Naive thymus-derived CD4-positive, alpha-beta T cell (primary cell): ENCODE measurements at regions of chr12 and their contacts with region 1.

Region 1: GRCh38 chr12:25347716-25348271 is 97.1 kb upstream of the KRAS start:
- DNase-seq: no peak
- ATAC-seq: no peak
- H3K4me3 ChIP-seq: no peak overlapping the region
- H3K4me3 Mint-ChIP-seq: no peak overlapping the region
- H3K27ac ChIP-seq: no peak overlapping the region
- H3K27ac Mint-ChIP-seq: peak overlapping the region in 2 of 9 donors; percentile 14 to 25
- H3K4me1 ChIP-seq: no peaks in the 10 kb centered on the region
- H3K4me1 Mint-ChIP-seq: peaks cover 0 to 8% (median 3%) of the 10 kb centered on the region in 7 donors
- H3K27me3 ChIP-seq: no peaks in the 10 kb centered on the region
- H3K27me3 Mint-ChIP-seq: peaks cover 0 to 9% (median 0%) of the 10 kb centered on the region in 5 donors

Region 2: GRCh38 chr12:25328072-25328712 is 19.6 kb before region 1 on chr12:
- CTCF ChIA-PET with region 1: no interaction called
- POLR2A ChIA-PET with region 1: interaction called, 3 read pairs
- intact Hi-C with region 1: loop called in 1 of 2 experiments (anchors 2 kb)
- DNase-seq: no peak
- ATAC-seq: no peak
- H3K4me3 ChIP-seq: no peak overlapping the region
- H3K4me3 Mint-ChIP-seq: no peak overlapping the region
- H3K27ac ChIP-seq: no peak overlapping the region
- H3K27ac Mint-ChIP-seq: no peak overlapping the region
- H3K4me1 ChIP-seq: peaks cover 6 to 11% of the 10 kb centered on the region in 2 donors
- H3K4me1 Mint-ChIP-seq: peaks cover 10 to 20% (median 16%) of the 10 kb centered on the region in 7 donors
- H3K27me3 ChIP-seq: no peaks in the 10 kb centered on the region
- H3K27me3 Mint-ChIP-seq: peaks cover 0 to 29% (median 0%) of the 10 kb centered on the region in 5 donors